A673 (cell line): ENCODE measurements at regions of chrX and their contacts with region 1.

Region 1: DNA sequence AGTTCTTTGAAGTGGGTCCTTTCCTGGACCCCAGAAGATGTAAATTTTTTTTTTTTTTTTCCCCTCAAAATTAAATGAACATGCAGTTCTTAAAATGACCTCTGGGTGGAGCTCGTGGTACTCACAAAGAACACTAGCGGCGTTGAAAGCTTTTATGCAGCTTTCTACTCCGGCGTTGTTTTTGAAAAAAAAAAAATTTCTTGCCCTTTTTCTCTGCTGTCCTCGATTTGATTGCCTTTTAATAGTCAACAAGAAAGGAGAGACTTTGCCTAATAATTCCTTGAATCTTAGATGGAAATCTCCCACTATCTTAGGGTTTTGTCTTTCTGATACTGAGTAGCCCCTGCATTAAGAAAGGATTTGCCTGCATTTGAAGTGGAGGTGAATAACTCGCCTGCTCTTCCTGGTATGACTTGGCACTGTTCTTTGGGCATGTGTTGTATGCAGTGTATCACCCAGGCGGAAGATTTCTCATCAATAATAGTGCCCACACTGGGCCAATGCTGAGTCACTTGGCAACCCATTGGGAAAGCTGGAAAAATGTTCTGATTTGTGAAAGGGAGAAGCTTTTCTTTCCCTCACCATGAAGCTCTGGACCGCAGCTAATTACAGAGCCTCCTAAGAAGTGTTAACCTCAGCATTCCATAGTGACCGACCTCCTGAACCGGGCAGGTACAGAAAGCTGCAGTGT is 104.0 kb downstream of the PHEX start:
- DNase-seq: peak; percentile 74
- H3K4me3 ChIP-seq: no peak overlapping the region
- H3K27ac ChIP-seq: no peak overlapping the region
- H3K4me1 ChIP-seq: peaks cover 4% of the 10 kb centered on the region
- H3K27me3 ChIP-seq: no peaks in the 10 kb centered on the region
- CTCF ChIP-seq: peak; percentile 78

Region 2: GRCh38 chrX:22748093-22748999 is 612.2 kb after region 1 on chrX:
- CTCF ChIA-PET with region 1: interaction called, 4 read pairs
- POLR2A ChIA-PET with region 1: no interaction called
- intact Hi-C with region 1: loop called (anchors 5 kb)
- DNase-seq: peak; percentile 61
- H3K4me3 ChIP-seq: no peak overlapping the region
- H3K27ac ChIP-seq: no peak overlapping the region
- H3K4me1 ChIP-seq: no peaks in the 10 kb centered on the region
- H3K27me3 ChIP-seq: no peaks in the 10 kb centered on the region
- CTCF ChIP-seq: peak; percentile 86

Region 3: GRCh38 chrX:23317799-23318724 is 1181.9 kb after region 1 on chrX:
- CTCF ChIA-PET with region 1: no interaction called
- POLR2A ChIA-PET with region 1: no interaction called
- intact Hi-C with region 1: loop called (anchors 2 kb)
- DNase-seq: peak; percentile 51
- H3K4me3 ChIP-seq: no peak overlapping the region
- H3K27ac ChIP-seq: no peak overlapping the region
- H3K4me1 ChIP-seq: no peaks in the 10 kb centered on the region
- H3K27me3 ChIP-seq: no peaks in the 10 kb centered on the region
- CTCF ChIP-seq: peak; percentile 92

Region 4: DNA sequence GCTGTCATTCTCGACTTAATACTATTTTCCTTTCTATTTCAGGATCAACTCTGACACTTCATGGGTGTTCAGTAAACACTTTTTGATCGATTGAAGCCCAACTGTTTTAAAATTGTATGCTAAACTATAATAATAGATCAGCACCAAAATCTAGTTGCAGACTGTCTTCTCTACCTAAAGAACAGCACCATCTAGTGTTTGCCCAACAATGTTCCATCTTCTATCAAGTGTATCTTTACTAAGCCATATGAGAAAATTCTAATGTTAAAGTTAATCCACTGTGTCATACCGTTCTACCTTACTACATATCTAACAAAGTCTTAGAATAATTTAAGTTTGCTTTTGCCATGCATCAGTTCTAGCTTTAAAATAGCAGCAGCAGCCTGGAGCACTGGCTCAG is 1418.2 kb after region 1 on chrX:
- CTCF ChIA-PET with region 1: no interaction called
- POLR2A ChIA-PET with region 1: no interaction called
- intact Hi-C with region 1: loop called (anchors 10 kb)
- DNase-seq: peak; percentile 49
- H3K4me3 ChIP-seq: no peak overlapping the region
- H3K27ac ChIP-seq: no peak overlapping the region
- H3K4me1 ChIP-seq: no peaks in the 10 kb centered on the region
- H3K27me3 ChIP-seq: no peaks in the 10 kb centered on the region
- CTCF ChIP-seq: peak; percentile 72

Region 5: GRCh38 chrX:23616361-23616760 is 1480.2 kb after region 1 on chrX:
- CTCF ChIA-PET with region 1: no interaction called
- POLR2A ChIA-PET with region 1: no interaction called
- intact Hi-C with region 1: loop called (anchors 10 kb)
- DNase-seq: peak; percentile 46
- H3K4me3 ChIP-seq: no peak overlapping the region
- H3K27ac ChIP-seq: no peak overlapping the region
- H3K4me1 ChIP-seq: no peaks in the 10 kb centered on the region
- H3K27me3 ChIP-seq: no peaks in the 10 kb centered on the region
- CTCF ChIP-seq: peak; percentile 65